Right lobe of liver (tissue), 6 donors: ENCODE measurements at regions of chr13 and their contacts with region 1.

Region 1: GRCh38 chr13:41960639-41961465 is at the start of gene VWA8:
- DNase-seq: peak; percentile 85 to 86 (median 86)
- ATAC-seq: peak; percentile 82 to 93 (median 91)
- H3K4me3 ChIP-seq: peak within 1 kb of the TSS; percentile 80 to 89 (median 80)
- H3K27ac ChIP-seq: peak within 1 kb of the TSS; percentile 87 to 91 (median 90)
- H3K4me1 ChIP-seq: peaks cover 0 to 37% (median 4%) of the 10 kb centered on the region in 4 donors
- H3K27me3 ChIP-seq: no peaks in the 10 kb centered on the region
- CTCF ChIP-seq: no peak
- POLR2A ChIP-seq: peak; percentile 62
- total RNA-seq, gene VWA8: 19.4 to 33.8 (median 30.8) TPM

Region 2: GRCh38 chr13:42039946-42040729 is 79.3 kb after region 1 on chr13:
- intact Hi-C with region 1: loop called in 1 of 2 experiments (anchors 10 kb)
- DNase-seq: peak; percentile 95
- ATAC-seq: peak; percentile 83 to 93 (median 90)
- H3K4me3 ChIP-seq: peak overlapping the region; percentile 61 to 88 (median 79)
- H3K27ac ChIP-seq: peak overlapping the region; percentile 75 to 94 (median 82)
- H3K4me1 ChIP-seq: peaks cover 0 to 11% (median 2%) of the 10 kb centered on the region in 4 donors
- H3K27me3 ChIP-seq: no peaks in the 10 kb centered on the region
- CTCF ChIP-seq: no peak
- POLR2A ChIP-seq: peak; percentile 98